ENCODE measurements at regions of chr3 and their contacts with region 1.

Region 1: GRCh38 chr3:171320750-171321558 is 139.3 kb downstream of the TNIK start:
- DNase-seq: peak in 1 of 10 donors; percentile 71

Region 2: DNA sequence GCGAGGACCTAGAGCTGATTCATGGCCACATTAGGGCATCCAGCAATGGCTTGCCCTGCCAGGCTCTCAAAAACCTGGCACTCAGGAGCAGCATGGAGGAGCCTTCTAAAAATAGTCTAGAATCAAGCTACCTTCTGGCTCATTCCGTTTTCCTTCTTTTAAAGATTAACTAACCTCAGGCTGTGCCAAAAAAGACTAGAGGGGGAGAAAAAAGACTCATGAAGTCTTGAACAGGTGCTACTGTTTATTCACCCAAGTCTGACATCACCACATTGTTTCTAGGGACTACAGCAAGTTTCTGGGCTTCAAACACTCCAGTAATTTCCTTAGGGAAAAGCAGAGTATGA is 13.5 kb after region 1 on chr3:
- intact Hi-C with region 1: loop called (anchors 1 kb)
- DNase-seq: no peak